ENCODE measurements at regions of chr1 and their contacts with region 1.

Region 1: GRCh38 chr1:29124366-29125236 is 898 bp upstream of the TMEM200B start:
- DNase-seq: peak; percentile 93
- ATAC-seq: peak; percentile 40
- H3K4me3 Mint-ChIP-seq: peak overlapping the region; percentile 65
- H3K27ac Mint-ChIP-seq: no peak overlapping the region; the same call in 1 of the 2 replicates
- H3K4me1 Mint-ChIP-seq: peaks cover 19% of the 10 kb centered on the region
- H3K27me3 Mint-ChIP-seq: peaks cover 23% of the 10 kb centered on the region
- CTCF ChIP-seq: 0 out of 2 replicates have a peak, but pooled peaks have one; percentile 36

Region 2: GRCh38 chr1:29011775-29012174 is 112.8 kb before region 1 on chr1:
- CTCF ChIA-PET with region 1: no interaction called
- POLR2A ChIA-PET with region 1: no interaction called
- DNase-seq: no peak
- ATAC-seq: no peak
- H3K4me3 Mint-ChIP-seq: no peak overlapping the region
- H3K27ac Mint-ChIP-seq: peak overlapping the region; percentile 7; the same call in 1 of the 2 replicates
- H3K4me1 Mint-ChIP-seq: 0 out of 2 replicates have a peak, but pooled peaks cover 3% of the 10 kb centered on the region
- H3K27me3 Mint-ChIP-seq: no peaks in the 10 kb centered on the region
- CTCF ChIP-seq: no peak

Region 3: GRCh38 chr1:29136391-29136915 is 11.9 kb after region 1 on chr1:
- CTCF ChIA-PET with region 1: interaction called, 30 read pairs
- POLR2A ChIA-PET with region 1: interaction called, 3 read pairs
- DNase-seq: no peak
- ATAC-seq: peak; percentile 63
- H3K4me3 Mint-ChIP-seq: no peak overlapping the region
- H3K27ac Mint-ChIP-seq: no peak overlapping the region; the same call in 1 of the 2 replicates
- H3K4me1 Mint-ChIP-seq: peaks cover 13% of the 10 kb centered on the region
- H3K27me3 Mint-ChIP-seq: no peaks in the 10 kb centered on the region
- CTCF ChIP-seq: no peak

Region 4: GRCh38 chr1:29202584-29203340 is 78.2 kb after region 1 on chr1:
- CTCF ChIA-PET with region 1: interaction called, 45 read pairs
- POLR2A ChIA-PET with region 1: interaction called, 4 read pairs
- DNase-seq: peak; percentile 99
- ATAC-seq: peak; percentile 96
- H3K4me3 Mint-ChIP-seq: no peak overlapping the region
- H3K27ac Mint-ChIP-seq: peak overlapping the region; percentile 68; the same call in 1 of the 2 replicates
- H3K4me1 Mint-ChIP-seq: peaks cover 8% of the 10 kb centered on the region
- H3K27me3 Mint-ChIP-seq: no peaks in the 10 kb centered on the region
- CTCF ChIP-seq: peak; percentile 95